ENCODE measurements at regions of chr2 and their contacts with region 1.

Region 1: GRCh38 chr2:44605511-44605910 is 243.8 kb downstream of the CAMKMT start:
- DNase-seq: no peak

Region 2: DNA sequence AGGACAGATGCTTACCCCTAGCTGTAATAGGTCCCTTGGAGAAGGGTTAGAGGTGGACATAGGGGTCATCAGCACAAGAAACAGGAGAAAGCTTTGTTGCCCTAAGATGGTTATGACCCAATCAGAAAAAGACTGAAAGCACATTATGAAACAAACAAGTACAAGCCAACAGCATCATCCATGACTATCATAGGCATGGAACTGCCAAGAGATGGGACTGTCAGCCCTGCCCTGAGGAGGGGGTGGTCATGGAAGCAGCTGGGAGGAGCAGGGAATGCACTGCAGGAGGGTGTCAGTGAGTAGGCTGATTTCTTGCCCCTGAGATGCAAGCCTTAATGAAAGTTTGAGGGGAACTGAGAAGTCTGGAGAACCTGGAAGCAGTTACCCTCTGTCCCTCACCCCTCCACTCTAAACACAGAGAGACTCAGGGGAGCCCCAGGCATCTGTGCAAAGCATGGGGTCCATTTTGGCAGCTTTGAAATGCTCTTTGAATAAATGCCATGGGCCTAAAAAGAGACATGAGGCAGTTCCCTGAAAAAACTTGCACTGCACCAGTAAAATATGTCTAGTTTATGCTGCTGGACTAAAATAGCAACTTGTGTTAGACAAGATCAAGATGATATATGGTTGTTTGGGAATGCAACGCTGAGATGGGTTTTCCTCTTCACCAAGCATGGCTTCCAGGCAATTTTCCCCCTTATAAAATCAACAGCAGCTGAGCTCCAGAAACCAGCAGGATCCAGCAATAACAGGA is 1256.4 kb before region 1 on chr2:
- intact Hi-C with region 1: no loop called
- DNase-seq: no peak

Region 3: GRCh38 chr2:44528595-44528994 is 76.9 kb before region 1 on chr2:
- intact Hi-C with region 1: no loop called
- DNase-seq: no peak

Region 4: DNA sequence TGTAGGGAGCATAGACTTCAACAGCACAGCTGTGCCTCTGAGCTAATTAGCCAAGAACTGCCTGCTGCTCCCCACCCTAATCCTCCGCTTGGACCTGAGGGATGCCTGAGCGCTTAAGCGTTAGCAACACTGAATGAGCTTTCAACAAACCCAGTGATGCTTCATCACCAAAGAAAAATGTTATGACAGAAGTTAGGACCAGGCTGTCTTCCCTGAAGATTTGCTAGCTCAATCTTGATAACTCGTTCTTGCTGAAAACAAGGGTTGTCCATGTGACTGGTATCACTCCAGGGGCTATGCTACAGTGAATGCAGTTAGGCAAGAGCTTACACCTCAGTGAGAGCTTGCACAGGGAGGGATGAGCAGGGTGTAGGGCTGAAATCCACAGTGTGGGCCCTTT is 594.5 kb after region 1 on chr2:
- intact Hi-C with region 1: loop called in 1 of 2 experiments (anchors 5 kb)
- DNase-seq: no peak

Region 5: GRCh38 chr2:45813003-45813941 is 1207.8 kb after region 1 on chr2:
- intact Hi-C with region 1: no loop called
- DNase-seq: no peak

Measured in posterior vena cava (tissue), 2 donors.